ENCODE measurements at regions of chr5 and their contacts with region 1.

Region 1: DNA sequence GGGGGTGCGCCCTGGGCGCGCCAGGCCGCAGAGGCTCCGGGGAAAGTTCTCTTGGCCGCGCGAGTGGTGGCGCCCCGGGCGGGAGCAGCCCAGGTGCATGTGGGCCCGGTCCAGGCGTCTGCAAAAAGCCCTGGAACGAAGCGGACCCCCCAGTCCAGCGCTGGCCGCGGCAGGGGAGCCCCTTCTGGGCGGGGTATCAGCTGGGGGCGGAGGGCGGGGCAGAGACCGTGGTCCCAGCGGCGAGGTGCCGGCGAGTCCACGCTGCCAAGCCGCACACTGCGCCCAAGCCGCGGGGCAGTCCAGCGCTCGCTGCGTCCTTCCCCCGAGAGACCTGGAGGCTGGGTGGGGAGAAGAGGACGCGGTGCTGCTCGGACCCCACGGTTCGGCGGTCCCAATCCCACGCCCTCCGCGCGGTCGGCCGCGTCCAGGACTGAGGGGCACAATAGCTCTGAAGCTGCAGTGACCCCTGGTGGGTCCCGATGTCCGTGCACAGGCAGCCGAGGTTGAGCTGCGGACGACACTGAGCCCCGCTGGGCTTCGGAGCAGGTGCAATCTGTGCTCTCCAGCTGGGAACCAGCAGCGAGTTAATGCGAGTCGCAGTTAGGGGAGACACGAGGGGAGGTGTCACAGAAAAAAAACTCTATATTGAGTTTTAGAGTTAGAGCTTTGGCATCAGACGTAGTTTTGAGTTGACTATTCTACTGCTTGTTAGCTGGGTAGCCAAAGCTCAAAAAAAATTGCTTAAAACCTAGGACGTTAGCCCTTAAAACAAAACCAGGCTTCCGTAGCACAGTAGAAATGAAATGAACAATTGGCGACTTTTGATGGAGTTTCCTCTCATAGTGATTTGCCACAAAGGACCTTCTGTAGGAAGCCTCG is 1.1 kb upstream of the EPB41L4A start:
- DNase-seq: peak; percentile 51 to 90
- H3K4me3 ChIP-seq: peak overlapping the region; percentile 60 to 88 (median 80)
- H3K27ac ChIP-seq: no peak overlapping the region
- H3K4me1 ChIP-seq: peaks cover 0 to 10% (median under 1%) of the 10 kb centered on the region in 4 experiments; a peak in 2 of 7 replicates
- H3K27me3 ChIP-seq: peaks cover 5 to 43% (median 23%) of the 10 kb centered on the region in 4 experiments
- CTCF ChIP-seq: peak; percentile 90 to 96 (median 91)
- EP300 ChIP-seq: no peak; a peak in 1 of 3 replicates
- POLR2A ChIP-seq: no peak
- RAD21 ChIP-seq: peak; percentile 87 to 94

Region 2: GRCh38 chr5:111494364-111494999 is 925.7 kb before region 1 on chr5:
- CTCF ChIA-PET with region 1: no interaction called
- POLR2A ChIA-PET with region 1: no interaction called
- DNase-seq: no peak
- H3K4me3 ChIP-seq: no peak overlapping the region
- H3K27ac ChIP-seq: peak overlapping the region; percentile 60; the same call in 1 of the 2 replicates
- H3K4me1 ChIP-seq: no peaks in the 10 kb centered on the region
- H3K27me3 ChIP-seq: no peaks in the 10 kb centered on the region
- CTCF ChIP-seq: no peak
- EP300 ChIP-seq: no peak
- POLR2A ChIP-seq: no peak
- RAD21 ChIP-seq: no peak

Region 3: DNA sequence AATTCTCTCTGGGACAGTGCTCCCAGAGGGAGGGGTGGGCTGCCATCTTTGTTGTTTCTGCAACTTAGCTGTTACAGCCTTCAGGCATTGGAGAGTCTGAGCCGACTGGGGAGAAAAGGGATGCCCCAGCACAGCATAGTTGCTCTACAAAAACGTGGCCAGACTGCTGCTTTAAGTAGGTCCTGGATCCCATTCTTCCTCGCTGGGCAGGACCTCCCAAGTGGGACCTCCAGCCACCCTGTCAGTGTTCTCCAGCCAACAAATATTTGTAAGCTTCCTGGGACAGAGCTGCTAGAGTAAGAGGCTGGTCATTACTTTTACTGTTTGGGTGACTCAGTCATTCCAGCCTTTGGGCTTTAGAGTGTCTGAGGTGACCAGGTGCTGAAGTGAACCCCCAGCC is 370.5 kb before region 1 on chr5:
- CTCF ChIA-PET with region 1: no interaction called
- POLR2A ChIA-PET with region 1: no interaction called
- DNase-seq: no peak
- H3K4me3 ChIP-seq: no peak overlapping the region
- H3K27ac ChIP-seq: no peak overlapping the region
- H3K4me1 ChIP-seq: no peaks in the 10 kb centered on the region
- H3K27me3 ChIP-seq: no peaks in the 10 kb centered on the region
- CTCF ChIP-seq: no peak
- EP300 ChIP-seq: no peak
- POLR2A ChIP-seq: no peak
- RAD21 ChIP-seq: no peak

Region 4: DNA sequence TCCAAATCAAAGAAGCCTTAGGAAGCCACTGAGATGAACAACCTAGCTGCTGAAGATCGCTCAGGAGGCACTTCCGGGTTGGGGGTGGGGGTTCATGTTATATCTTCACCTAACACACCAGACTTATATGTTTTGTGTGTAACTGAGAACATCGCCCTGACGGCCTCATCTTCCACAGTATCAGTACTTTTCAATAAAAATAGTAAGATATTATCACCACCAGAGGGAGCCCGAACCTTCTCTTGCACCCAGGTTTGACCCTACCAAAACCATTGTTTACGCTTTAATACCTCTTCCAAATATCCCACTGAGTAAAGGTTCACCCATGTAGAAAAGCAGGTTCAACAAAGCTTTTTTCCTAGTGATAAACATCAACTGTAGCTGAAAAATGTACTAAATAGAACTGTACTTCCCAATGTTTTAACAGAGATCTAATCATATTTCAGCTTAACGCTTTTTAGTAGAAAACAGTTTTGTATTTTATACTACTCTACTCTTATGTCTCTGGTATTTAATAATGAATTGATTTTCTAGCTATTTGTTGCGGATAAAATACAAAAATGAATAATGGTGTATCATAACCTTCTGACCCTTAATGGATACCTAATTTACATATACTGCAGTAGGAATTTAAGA is 245.1 kb before region 1 on chr5:
- CTCF ChIA-PET with region 1: interaction called, 77 read pairs
- POLR2A ChIA-PET with region 1: no interaction called
- DNase-seq: no peak
- H3K4me3 ChIP-seq: no peak overlapping the region
- H3K27ac ChIP-seq: no peak overlapping the region
- H3K4me1 ChIP-seq: no peaks in the 10 kb centered on the region
- H3K27me3 ChIP-seq: no peaks in the 10 kb centered on the region
- CTCF ChIP-seq: peak in 2 of 3 experiments; percentile 60 to 63; a peak in 3 of 4 replicates
- EP300 ChIP-seq: no peak
- POLR2A ChIP-seq: no peak
- RAD21 ChIP-seq: peak; percentile 82 to 87

Region 5: GRCh38 chr5:112203229-112203628 is 217.0 kb before region 1 on chr5:
- CTCF ChIA-PET with region 1: interaction called, 14 read pairs
- POLR2A ChIA-PET with region 1: no interaction called
- DNase-seq: no peak
- H3K4me3 ChIP-seq: no peak overlapping the region
- H3K27ac ChIP-seq: no peak overlapping the region
- H3K4me1 ChIP-seq: peaks cover 0 to 11% (median 3%) of the 10 kb centered on the region in 4 experiments; a peak in 3 of 7 replicates
- H3K27me3 ChIP-seq: no peaks in the 10 kb centered on the region
- CTCF ChIP-seq: no peak
- EP300 ChIP-seq: no peak
- POLR2A ChIP-seq: no peak
- RAD21 ChIP-seq: no peak

Region 6: GRCh38 chr5:112239996-112240395 is 180.2 kb before region 1 on chr5:
- CTCF ChIA-PET with region 1: interaction called, 10 read pairs
- POLR2A ChIA-PET with region 1: no interaction called
- DNase-seq: no peak
- H3K4me3 ChIP-seq: no peak overlapping the region
- H3K27ac ChIP-seq: no peak overlapping the region
- H3K4me1 ChIP-seq: peaks cover 0 to 2% (median 0%) of the 10 kb centered on the region in 4 experiments; a peak in 1 of 7 replicates
- H3K27me3 ChIP-seq: peaks cover 0 to 1% (median 0%) of the 10 kb centered on the region in 4 experiments; a peak in 1 of 7 replicates
- CTCF ChIP-seq: peak in 1 of 3 experiments; percentile 29; a peak in 1 of 4 replicates
- EP300 ChIP-seq: no peak
- POLR2A ChIP-seq: no peak
- RAD21 ChIP-seq: peak; percentile 13 to 23; a peak in 1 of 4 replicates

Region 7: GRCh38 chr5:112388739-112389138 is 31.5 kb before region 1 on chr5:
- CTCF ChIA-PET with region 1: interaction called, 13 read pairs
- POLR2A ChIA-PET with region 1: no interaction called
- DNase-seq: no peak
- H3K4me3 ChIP-seq: no peak overlapping the region
- H3K27ac ChIP-seq: no peak overlapping the region
- H3K4me1 ChIP-seq: peaks cover 0 to 8% (median 2%) of the 10 kb centered on the region in 4 experiments; a peak in 2 of 7 replicates
- H3K27me3 ChIP-seq: no peaks in the 10 kb centered on the region
- CTCF ChIP-seq: no peak
- EP300 ChIP-seq: no peak
- POLR2A ChIP-seq: no peak
- RAD21 ChIP-seq: no peak

Region 8: GRCh38 chr5:112492291-112492690 is 72.1 kb after region 1 on chr5:
- CTCF ChIA-PET with region 1: interaction called, 10 read pairs
- POLR2A ChIA-PET with region 1: no interaction called
- DNase-seq: peak; percentile 27 to 56
- H3K4me3 ChIP-seq: no peak overlapping the region
- H3K27ac ChIP-seq: no peak overlapping the region
- H3K4me1 ChIP-seq: no peaks in the 10 kb centered on the region
- H3K27me3 ChIP-seq: no peaks in the 10 kb centered on the region
- CTCF ChIP-seq: peak; percentile 82 to 98 (median 82)
- EP300 ChIP-seq: no peak
- POLR2A ChIP-seq: no peak
- RAD21 ChIP-seq: peak; percentile 67 to 75

Measured in H1 (cell line).